Activated CD8-positive, alpha-beta T cell treated with anti-CD3 and anti-CD28 coated beads for 36 hours (primary cell): ENCODE measurements at regions of chr13 and their contacts with region 1.

Region 1: DNA sequence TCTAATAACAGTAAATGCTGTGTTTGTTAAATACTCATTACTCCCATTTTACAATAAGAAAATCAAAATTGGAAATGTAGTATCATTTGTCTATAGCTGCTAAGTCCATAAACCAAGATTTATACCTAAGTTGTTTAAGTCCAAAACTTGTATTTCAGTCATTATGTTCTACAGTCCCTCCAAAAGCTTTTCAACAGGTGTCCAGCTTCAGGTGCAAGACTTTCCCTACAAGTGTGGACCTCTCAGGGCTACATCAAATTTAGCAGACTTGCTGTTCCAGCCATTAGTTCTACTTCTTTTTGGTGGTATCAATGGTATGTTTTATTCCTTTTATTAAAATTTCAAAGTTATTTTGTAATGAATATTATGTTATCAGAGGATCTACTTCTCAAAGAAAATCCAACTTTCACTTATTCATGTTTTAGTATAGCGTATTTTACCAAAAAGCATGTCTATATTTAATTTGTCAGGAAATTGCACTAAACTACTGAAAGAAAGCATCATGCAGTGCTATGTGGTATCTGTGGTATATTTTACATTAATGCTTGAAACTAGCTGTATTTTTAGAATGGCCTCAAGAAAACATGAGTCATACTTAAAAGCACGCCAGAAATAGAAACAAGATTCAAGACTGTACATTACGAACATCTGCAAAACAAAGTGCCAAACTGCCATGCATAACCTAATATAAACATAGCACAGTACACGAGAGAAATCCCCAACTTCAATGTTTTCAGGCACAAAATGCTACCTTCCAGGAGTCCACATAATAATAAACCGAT is 44.5 kb downstream of the VWA8 start:
- DNase-seq: no peak
- ATAC-seq: peak; percentile 64
- H3K4me3 Mint-ChIP-seq: peak overlapping the region; percentile 62
- H3K27ac Mint-ChIP-seq: peak overlapping the region; percentile 97
- H3K4me1 Mint-ChIP-seq: peaks cover 65% of the 10 kb centered on the region
- H3K27me3 Mint-ChIP-seq: no peaks in the 10 kb centered on the region
- CTCF ChIP-seq: no peak

Region 2: GRCh38 chr13:41854758-41855157 is 61.6 kb before region 1 on chr13:
- CTCF ChIA-PET with region 1: no interaction called
- POLR2A ChIA-PET with region 1: no interaction called
- intact Hi-C with region 1: no loop called
- DNase-seq: no peak
- ATAC-seq: no peak
- H3K4me3 Mint-ChIP-seq: no peak overlapping the region
- H3K27ac Mint-ChIP-seq: no peak overlapping the region
- H3K4me1 Mint-ChIP-seq: no peaks in the 10 kb centered on the region
- H3K27me3 Mint-ChIP-seq: no peaks in the 10 kb centered on the region
- CTCF ChIP-seq: no peak

Region 3: DNA sequence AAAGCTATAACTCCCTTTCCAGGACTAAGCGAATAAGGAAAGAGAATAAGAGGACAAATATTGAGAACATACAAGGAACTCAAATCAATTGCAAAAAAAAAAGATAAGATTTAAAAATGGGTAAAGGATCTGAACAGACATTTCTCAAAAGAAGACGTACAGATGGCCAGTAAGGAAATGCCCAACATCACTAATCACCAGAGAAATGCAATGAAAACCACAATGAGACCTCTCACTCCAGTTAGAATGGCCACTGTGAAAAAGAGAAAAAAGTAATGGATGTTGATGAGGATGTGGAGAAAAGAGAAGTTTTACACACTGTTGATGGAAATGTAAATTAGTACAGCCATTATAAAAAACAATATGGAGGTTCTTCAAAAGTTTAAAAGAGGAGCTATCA is 19.2 kb before region 1 on chr13:
- CTCF ChIA-PET with region 1: no interaction called
- POLR2A ChIA-PET with region 1: no interaction called
- intact Hi-C with region 1: no loop called
- DNase-seq: no peak
- ATAC-seq: no peak
- H3K4me3 Mint-ChIP-seq: no peak overlapping the region
- H3K27ac Mint-ChIP-seq: no peak overlapping the region
- H3K4me1 Mint-ChIP-seq: peaks cover 8% of the 10 kb centered on the region
- H3K27me3 Mint-ChIP-seq: no peaks in the 10 kb centered on the region
- CTCF ChIP-seq: no peak

Region 4: GRCh38 chr13:41960639-41961465 is 44.5 kb after region 1 on chr13 and contains the start of gene VWA8:
- CTCF ChIA-PET with region 1: interaction called, 5 read pairs
- POLR2A ChIA-PET with region 1: interaction called, 10 read pairs
- intact Hi-C with region 1: loop called (anchors 5 kb)
- DNase-seq: peak; percentile 90
- ATAC-seq: peak; percentile 93
- H3K4me3 Mint-ChIP-seq: peak within 1 kb of the TSS; percentile 93
- H3K27ac Mint-ChIP-seq: peak within 1 kb of the TSS; percentile 96
- H3K4me1 Mint-ChIP-seq: peaks cover 51% of the 10 kb centered on the region
- H3K27me3 Mint-ChIP-seq: peaks cover 2% of the 10 kb centered on the region
- CTCF ChIP-seq: no peak
- total RNA-seq, gene VWA8: 26.3 to 27.5 TPM

Region 5: DNA sequence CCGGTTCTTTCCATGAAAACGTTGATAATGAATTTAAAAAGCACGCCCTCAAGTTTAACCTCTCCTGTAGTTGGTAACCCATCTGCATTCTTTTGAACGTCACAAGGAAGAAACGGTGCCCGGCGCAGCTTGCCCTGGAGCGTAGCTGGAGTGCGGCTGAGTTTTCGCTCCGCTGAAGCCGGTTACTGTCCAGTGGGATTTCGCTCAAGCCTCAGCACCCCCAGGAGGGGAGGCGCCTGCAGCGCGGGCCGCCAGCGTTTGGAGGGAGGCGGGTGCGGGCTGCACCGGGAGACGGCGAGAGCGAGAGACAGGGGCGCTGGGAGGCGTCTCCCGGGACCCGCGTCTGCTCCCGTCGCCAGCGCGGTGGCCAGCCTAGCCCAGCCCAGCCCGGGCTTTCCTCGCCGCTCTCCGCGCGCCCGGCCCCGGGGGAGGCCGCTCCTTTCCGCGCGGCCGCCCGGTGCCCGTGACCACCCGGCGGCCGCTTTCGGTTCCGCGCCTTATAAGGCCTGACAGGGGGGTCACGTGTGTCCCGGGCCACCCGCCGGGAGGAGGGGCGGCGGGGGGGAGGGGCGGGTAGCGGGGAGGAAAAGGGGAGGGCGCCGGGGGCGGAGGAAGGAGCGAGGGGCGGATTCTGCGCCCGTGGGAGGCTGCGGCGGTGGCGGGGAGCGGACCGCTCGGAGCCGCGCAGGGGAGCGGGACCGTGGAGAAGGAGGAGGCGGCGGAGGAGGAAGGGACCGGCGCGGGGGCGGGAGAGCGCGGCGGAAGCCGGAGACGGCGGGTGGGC is 123.8 kb after region 1 on chr13:
- CTCF ChIA-PET with region 1: interaction called, 3 read pairs
- POLR2A ChIA-PET with region 1: no interaction called
- intact Hi-C with region 1: loop called (anchors 5 kb)
- DNase-seq: peak; percentile 85
- ATAC-seq: peak; percentile 79
- H3K4me3 Mint-ChIP-seq: peak overlapping the region; percentile 70
- H3K27ac Mint-ChIP-seq: peak overlapping the region; percentile 79
- H3K4me1 Mint-ChIP-seq: peaks cover 26% of the 10 kb centered on the region
- H3K27me3 Mint-ChIP-seq: peaks cover 2% of the 10 kb centered on the region
- CTCF ChIP-seq: no peak

Region 6: GRCh38 chr13:42271337-42272114 is 355.2 kb after region 1 on chr13:
- CTCF ChIA-PET with region 1: no interaction called
- POLR2A ChIA-PET with region 1: no interaction called
- intact Hi-C with region 1: loop called (anchors 10 kb)
- DNase-seq: peak; percentile 96
- ATAC-seq: peak; percentile 86
- H3K4me3 Mint-ChIP-seq: peak overlapping the region; percentile 99
- H3K27ac Mint-ChIP-seq: peak overlapping the region; percentile 85
- H3K4me1 Mint-ChIP-seq: peaks cover 41% of the 10 kb centered on the region
- H3K27me3 Mint-ChIP-seq: no peaks in the 10 kb centered on the region
- CTCF ChIP-seq: no peak